Heart right ventricle (tissue), 16 donors: ENCODE measurements at regions of chr3 and their contacts with region 1.

Region 1: GRCh38 chr3:66539466-66539989 is 38.7 kb upstream of the LRIG1 start:
- DNase-seq: no peak
- ATAC-seq: no peak
- H3K4me3 ChIP-seq: no peak overlapping the region
- H3K27ac ChIP-seq: no peak overlapping the region
- H3K4me1 ChIP-seq: no peaks in the 10 kb centered on the region
- H3K27me3 ChIP-seq: no peaks in the 10 kb centered on the region
- CTCF ChIP-seq: no peak

Region 2: DNA sequence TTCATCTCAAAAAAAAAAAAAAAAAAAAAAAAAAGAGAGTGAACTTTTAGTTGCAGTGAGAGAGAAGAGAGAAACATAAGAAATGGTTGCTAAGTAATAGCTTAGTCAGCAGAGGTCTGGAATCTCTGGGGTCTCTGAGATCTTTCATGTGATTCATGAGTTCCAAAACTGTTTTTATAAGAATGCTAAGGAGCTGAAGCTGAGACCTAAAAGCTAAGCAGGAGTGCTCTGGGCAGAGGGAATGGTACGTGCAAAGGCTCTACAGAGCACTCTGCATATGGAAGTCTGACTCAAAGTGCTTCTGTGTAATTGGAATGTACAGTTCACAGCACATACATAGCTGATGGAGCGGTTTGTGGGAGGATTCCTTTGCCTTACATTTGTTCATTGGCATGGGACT is 27.5 kb after region 1 on chr3:
- intact Hi-C with region 1: loop called in 1 of 10 experiments (anchors 1 kb)
- DNase-seq: no peak
- ATAC-seq: no peak
- H3K4me3 ChIP-seq: no peak overlapping the region
- H3K27ac ChIP-seq: no peak overlapping the region
- H3K4me1 ChIP-seq: no peaks in the 10 kb centered on the region
- H3K27me3 ChIP-seq: no peaks in the 10 kb centered on the region
- CTCF ChIP-seq: no peak

Region 3: DNA sequence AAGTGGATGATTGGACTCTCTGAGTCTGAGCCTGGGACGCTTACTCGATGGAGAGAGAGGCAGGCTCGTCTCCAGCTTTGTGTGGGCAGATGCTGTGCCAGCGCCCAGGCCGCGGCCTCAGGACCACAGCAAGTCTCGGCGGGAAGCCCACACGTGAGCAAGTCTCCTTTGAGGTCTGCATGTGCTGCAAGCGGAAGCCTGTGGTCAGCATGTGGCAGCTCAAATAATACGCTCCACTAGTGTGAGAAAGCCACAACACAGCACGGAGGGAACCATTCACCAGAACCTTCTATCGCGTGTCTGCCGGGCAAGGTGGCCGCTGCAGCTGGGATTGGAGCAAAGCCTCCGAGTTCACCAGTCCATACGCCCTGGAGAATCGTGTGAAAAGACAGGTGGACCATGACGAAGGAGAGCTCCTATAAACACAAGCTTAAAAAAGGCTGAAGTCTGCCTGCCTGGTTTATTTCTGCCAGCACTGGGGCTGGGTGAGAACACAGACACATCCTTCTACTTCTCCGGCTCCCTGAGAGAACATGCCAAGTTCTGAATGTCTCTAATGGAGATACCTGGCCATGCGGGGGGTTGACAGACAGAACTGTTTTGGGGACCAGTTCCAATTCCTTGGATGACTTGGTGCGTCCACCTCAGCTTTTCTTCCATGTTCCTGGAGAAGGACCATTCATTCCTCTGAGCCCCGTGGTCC is 43.3 kb after region 1 on chr3:
- intact Hi-C with region 1: no loop called
- DNase-seq: no peak
- ATAC-seq: no peak
- H3K4me3 ChIP-seq: no peak overlapping the region
- H3K27ac ChIP-seq: no peak overlapping the region
- H3K4me1 ChIP-seq: no peaks in the 10 kb centered on the region
- H3K27me3 ChIP-seq: peaks cover 0 to 4% (median 0%) of the 10 kb centered on the region in 7 donors
- CTCF ChIP-seq: no peak